CD8-positive, alpha-beta T cell (primary cell): ENCODE measurements at regions of chr20 and their contacts with region 1.

Region 1: GRCh38 chr20:59948828-59949720 is 8.9 kb downstream of the FAM217B start:
- DNase-seq: peak in 4 of 9 experiments; percentile 22 to 82 (median 53)
- ATAC-seq: peak; percentile 91
- H3K4me3 ChIP-seq: no peak overlapping the region
- H3K4me3 Mint-ChIP-seq: peak overlapping the region; percentile 57
- H3K27ac ChIP-seq: peak overlapping the region; percentile 30 to 37
- H3K27ac Mint-ChIP-seq: peak overlapping the region; percentile 91
- H3K4me1 ChIP-seq: peaks cover 6% of the 10 kb centered on the region
- H3K4me1 Mint-ChIP-seq: peaks cover 18% of the 10 kb centered on the region
- H3K27me3 ChIP-seq: no peaks in the 10 kb centered on the region
- H3K27me3 Mint-ChIP-seq: no peaks in the 10 kb centered on the region
- CTCF ChIP-seq: peak; percentile 89

Region 2: DNA sequence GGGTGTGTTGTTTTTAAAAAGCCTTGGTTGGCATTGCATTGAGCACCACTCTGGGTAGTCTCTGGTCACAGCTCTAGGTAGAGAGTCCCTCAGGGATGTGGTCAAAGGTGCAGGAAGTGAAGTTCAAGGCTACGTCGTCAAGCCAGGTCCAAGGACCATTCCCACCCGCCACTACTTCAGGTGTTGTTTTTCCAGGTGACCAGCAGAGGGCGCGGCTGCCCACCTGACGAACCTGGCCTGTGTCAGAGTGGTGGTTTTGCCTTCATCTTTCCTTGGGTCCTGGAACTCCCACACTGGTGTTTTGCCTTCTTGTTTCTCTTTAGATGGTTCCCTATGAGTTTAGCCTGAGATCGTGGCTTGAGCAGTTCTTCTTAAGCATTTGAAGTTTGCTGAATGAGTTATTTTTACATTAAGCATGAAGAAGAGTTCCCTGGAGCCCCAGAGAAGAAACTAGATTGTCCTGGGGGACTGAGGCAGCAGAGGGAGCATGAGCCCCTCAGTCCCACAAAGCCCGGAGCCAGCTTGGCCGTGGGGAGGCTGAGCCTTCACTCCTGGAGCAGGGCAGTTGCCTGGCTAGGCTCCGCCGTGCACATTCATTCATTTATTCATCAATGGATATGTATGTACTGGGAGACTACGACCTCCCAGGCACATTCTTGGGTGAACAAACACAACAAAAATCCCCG is 350.3 kb before region 1 on chr20:
- CTCF ChIA-PET with region 1: no interaction called
- POLR2A ChIA-PET with region 1: no interaction called
- intact Hi-C with region 1: no loop called
- DNase-seq: peak in 4 of 9 experiments; percentile 27 to 44 (median 32)
- ATAC-seq: no peak
- H3K4me3 ChIP-seq: no peak overlapping the region
- H3K4me3 Mint-ChIP-seq: no peak overlapping the region
- H3K27ac ChIP-seq: no peak overlapping the region
- H3K27ac Mint-ChIP-seq: no peak overlapping the region
- H3K4me1 ChIP-seq: no peaks in the 10 kb centered on the region
- H3K4me1 Mint-ChIP-seq: peaks cover 2% of the 10 kb centered on the region
- H3K27me3 ChIP-seq: no peaks in the 10 kb centered on the region
- H3K27me3 Mint-ChIP-seq: peaks cover 47% of the 10 kb centered on the region
- CTCF ChIP-seq: peak; percentile 68

Region 3: GRCh38 chr20:59912609-59913008 is 36.5 kb before region 1 on chr20:
- CTCF ChIA-PET with region 1: no interaction called
- POLR2A ChIA-PET with region 1: no interaction called
- intact Hi-C with region 1: no loop called
- DNase-seq: no peak
- ATAC-seq: no peak
- H3K4me3 ChIP-seq: no peak overlapping the region
- H3K4me3 Mint-ChIP-seq: no peak overlapping the region
- H3K27ac ChIP-seq: no peak overlapping the region
- H3K27ac Mint-ChIP-seq: no peak overlapping the region
- H3K4me1 ChIP-seq: no peaks in the 10 kb centered on the region
- H3K4me1 Mint-ChIP-seq: no peaks in the 10 kb centered on the region
- H3K27me3 ChIP-seq: no peaks in the 10 kb centered on the region
- H3K27me3 Mint-ChIP-seq: peaks cover 1% of the 10 kb centered on the region
- CTCF ChIP-seq: no peak

Region 4: GRCh38 chr20:59933849-59934596 is 15.1 kb before region 1 on chr20:
- CTCF ChIA-PET with region 1: interaction called, 24 read pairs
- POLR2A ChIA-PET with region 1: interaction called, 12 read pairs
- intact Hi-C with region 1: loop called in 1 of 2 experiments (anchors 1 kb)
- DNase-seq: peak; percentile 60 to 87 (median 79)
- ATAC-seq: peak; percentile 73
- H3K4me3 ChIP-seq: peak overlapping the region; percentile 65 to 85
- H3K4me3 Mint-ChIP-seq: peak overlapping the region; percentile 79
- H3K27ac ChIP-seq: peak overlapping the region; percentile 32 to 68
- H3K27ac Mint-ChIP-seq: peak overlapping the region; percentile 57
- H3K4me1 ChIP-seq: peaks cover 12% of the 10 kb centered on the region
- H3K4me1 Mint-ChIP-seq: peaks cover 26% of the 10 kb centered on the region
- H3K27me3 ChIP-seq: no peaks in the 10 kb centered on the region
- H3K27me3 Mint-ChIP-seq: no peaks in the 10 kb centered on the region
- CTCF ChIP-seq: peak; percentile 94

Region 5: DNA sequence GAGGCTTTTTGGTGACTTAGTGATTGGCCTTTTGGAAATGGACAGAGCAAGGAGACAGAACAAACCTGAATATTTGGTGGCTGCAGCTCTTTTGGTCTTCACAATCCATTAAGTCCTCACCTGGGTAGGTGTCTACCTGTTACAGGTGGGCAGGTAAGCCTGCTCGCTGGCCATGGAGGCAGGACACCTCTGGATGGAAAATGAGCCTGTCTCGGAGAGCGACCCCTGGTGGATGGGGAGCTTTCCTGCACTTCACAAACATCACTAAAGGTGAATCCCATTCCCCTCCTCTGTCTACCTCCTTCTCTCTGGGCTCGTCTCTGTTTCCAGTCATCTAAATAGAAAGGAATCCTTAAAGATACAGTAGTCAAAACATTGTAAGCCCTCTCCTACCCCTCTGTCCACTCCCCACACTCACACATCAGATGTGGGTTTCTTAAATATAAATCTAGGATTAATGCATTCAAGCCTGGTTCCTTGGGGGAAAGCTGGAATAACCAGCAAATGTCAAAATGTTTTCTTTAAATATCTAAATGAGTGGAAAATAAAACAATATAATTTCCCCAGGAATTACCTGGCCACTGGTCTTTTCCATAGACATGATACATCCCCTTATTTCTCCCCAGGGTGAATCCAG is 314.0 kb after region 1 on chr20:
- CTCF ChIA-PET with region 1: interaction called, 28 read pairs
- POLR2A ChIA-PET with region 1: no interaction called
- intact Hi-C with region 1: loop called in 1 of 2 experiments (anchors 1 kb)
- DNase-seq: peak; percentile 6 to 70 (median 56)
- ATAC-seq: no peak
- H3K4me3 ChIP-seq: no peak overlapping the region
- H3K4me3 Mint-ChIP-seq: no peak overlapping the region
- H3K27ac ChIP-seq: no peak overlapping the region
- H3K27ac Mint-ChIP-seq: no peak overlapping the region
- H3K4me1 ChIP-seq: peaks cover 22% of the 10 kb centered on the region
- H3K4me1 Mint-ChIP-seq: peaks cover 19% of the 10 kb centered on the region
- H3K27me3 ChIP-seq: no peaks in the 10 kb centered on the region
- H3K27me3 Mint-ChIP-seq: no peaks in the 10 kb centered on the region
- CTCF ChIP-seq: peak; percentile 73

Region 6: DNA sequence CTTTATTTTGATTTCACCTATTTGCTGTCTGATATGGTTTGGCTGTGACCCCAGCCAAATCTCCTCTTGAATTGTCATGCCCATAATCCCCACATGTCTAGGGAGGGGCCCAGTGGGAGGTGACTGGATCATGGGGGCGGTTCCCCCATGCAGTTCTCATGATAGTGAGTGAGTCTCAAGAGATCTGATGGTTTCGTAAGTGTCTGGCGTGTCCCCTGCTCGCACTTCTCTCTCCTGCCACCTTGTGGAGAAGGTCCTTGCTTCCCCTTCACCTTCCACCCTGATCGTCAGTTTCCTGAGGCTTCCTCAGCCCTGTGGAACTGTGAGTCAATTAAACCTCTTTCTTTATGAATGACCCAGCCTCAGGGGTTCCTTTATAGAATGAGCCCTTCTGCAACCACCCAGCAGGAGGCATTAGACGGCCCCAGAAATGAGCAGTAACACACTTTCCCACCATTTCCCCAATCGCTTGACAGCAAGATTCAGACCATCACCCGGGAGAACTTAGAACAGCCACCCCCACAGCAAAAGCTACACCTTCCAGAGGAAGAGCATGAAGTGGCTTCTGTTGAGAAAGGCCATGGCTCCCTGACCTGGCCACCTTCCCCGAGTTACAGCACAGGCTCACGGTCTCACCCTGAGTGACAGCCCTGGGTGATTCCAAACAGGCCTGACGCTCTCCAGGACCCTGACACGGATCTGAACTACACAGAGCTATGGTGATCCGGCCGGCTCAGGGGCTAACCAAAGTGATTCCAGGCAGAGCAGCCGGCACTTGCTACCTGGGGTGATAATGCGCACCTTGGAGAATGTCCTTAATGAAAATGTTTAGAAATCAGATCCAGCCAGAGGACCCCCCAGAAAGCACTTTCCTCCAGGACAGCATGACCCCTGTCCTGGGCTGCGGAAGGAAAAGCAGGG is 1171.8 kb after region 1 on chr20:
- CTCF ChIA-PET with region 1: interaction called, 3 read pairs
- POLR2A ChIA-PET with region 1: no interaction called
- intact Hi-C with region 1: loop called (anchors 1 to 2 kb)
- DNase-seq: peak in 5 of 9 experiments; percentile 8 to 59 (median 26)
- ATAC-seq: peak; percentile 31
- H3K4me3 ChIP-seq: no peak overlapping the region
- H3K4me3 Mint-ChIP-seq: no peak overlapping the region
- H3K27ac ChIP-seq: no peak overlapping the region
- H3K27ac Mint-ChIP-seq: no peak overlapping the region
- H3K4me1 ChIP-seq: no peaks in the 10 kb centered on the region
- H3K4me1 Mint-ChIP-seq: peaks cover 3% of the 10 kb centered on the region
- H3K27me3 ChIP-seq: no peaks in the 10 kb centered on the region
- H3K27me3 Mint-ChIP-seq: peaks cover 2% of the 10 kb centered on the region
- CTCF ChIP-seq: no peak

Region 7: GRCh38 chr20:61234803-61235113 is 1285.7 kb after region 1 on chr20:
- CTCF ChIA-PET with region 1: no interaction called
- POLR2A ChIA-PET with region 1: interaction called, 3 read pairs
- intact Hi-C with region 1: loop called (anchors 2 kb)
- DNase-seq: no peak
- ATAC-seq: no peak
- H3K4me3 ChIP-seq: no peak overlapping the region
- H3K4me3 Mint-ChIP-seq: no peak overlapping the region
- H3K27ac ChIP-seq: no peak overlapping the region
- H3K27ac Mint-ChIP-seq: no peak overlapping the region
- H3K4me1 ChIP-seq: no peaks in the 10 kb centered on the region
- H3K4me1 Mint-ChIP-seq: no peaks in the 10 kb centered on the region
- H3K27me3 ChIP-seq: no peaks in the 10 kb centered on the region
- H3K27me3 Mint-ChIP-seq: peaks cover 4% of the 10 kb centered on the region
- CTCF ChIP-seq: no peak

Region 8: DNA sequence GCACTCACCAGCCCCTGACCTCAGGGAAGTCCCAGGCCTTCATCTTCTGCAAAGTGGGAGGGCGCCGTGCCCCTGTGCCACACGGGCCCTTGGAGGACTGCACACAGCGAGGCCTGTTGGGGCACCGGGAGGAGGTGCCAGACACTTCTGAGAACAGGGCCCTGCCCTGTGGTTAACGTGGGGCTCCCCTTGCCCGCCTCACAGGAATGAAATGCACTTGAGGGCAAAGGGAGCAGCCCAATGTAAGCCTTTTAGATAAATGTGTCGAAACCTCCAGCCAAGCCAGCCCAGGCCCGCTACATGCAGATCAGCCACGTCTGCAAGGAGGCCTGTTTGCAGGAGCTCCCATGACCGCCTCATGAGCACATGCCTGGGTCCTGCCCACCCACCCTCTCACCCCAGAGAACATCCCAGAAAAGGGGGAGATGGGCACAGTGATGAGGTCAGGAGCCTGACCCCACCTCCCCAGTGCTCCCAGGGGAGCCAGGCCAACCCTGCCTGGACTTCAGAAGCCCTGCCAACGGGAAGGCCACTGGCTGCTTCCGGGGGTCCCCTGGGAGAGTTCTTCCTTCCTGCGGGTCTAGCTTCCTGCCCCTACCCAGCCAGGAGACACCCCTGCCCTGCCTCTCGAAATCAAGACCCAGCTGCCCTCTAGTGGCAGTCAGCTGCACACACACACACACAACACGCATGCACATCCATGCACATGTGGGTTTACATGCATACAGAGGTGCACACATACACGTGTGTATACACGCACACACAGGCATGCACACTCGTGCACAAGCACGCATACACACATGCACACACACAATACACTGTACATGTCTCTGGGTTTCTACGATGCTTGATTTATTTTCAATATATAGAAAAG is 1937.9 kb after region 1 on chr20:
- CTCF ChIA-PET with region 1: no interaction called
- POLR2A ChIA-PET with region 1: no interaction called
- intact Hi-C with region 1: loop called in 1 of 2 experiments (anchors 2 kb)
- DNase-seq: peak in 8 of 9 experiments; percentile 10 to 55 (median 32)
- ATAC-seq: no peak
- H3K4me3 ChIP-seq: no peak overlapping the region
- H3K4me3 Mint-ChIP-seq: no peak overlapping the region
- H3K27ac ChIP-seq: no peak overlapping the region
- H3K27ac Mint-ChIP-seq: no peak overlapping the region
- H3K4me1 ChIP-seq: no peaks in the 10 kb centered on the region
- H3K4me1 Mint-ChIP-seq: peaks cover 3% of the 10 kb centered on the region
- H3K27me3 ChIP-seq: no peaks in the 10 kb centered on the region
- H3K27me3 Mint-ChIP-seq: peaks cover 20% of the 10 kb centered on the region
- CTCF ChIP-seq: peak; percentile 21